Activated CD8-positive, alpha-beta T cell treated with anti-CD3 and anti-CD28 coated beads, Interleukin-2, amount 10 ng/mL, durations not matched to agents 7 days and 5 days (primary cell): ENCODE measurements at regions of chr1 and their contacts with region 1.

Region 1: DNA sequence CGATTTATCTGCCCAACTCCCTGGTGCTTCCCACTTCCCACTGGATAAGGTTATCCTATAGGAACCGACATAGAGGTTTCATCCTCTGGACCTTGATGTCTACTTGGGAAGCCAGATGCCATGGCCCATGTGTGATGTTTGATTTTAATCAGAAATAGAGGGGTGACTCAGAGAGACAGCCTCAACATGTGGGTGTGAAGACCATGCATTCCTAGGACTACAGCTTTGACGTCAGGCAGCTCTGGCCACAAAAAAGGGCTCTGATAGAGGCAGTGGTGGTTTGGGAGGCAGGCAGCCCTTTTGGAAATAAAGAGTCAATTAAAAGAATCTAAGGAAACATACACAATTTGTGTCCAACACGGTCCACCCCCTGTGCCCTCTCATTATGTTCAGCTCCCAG is 5.2 kb upstream of the SH2D2A start:
- DNase-seq: no peak
- ATAC-seq: peak; percentile 12
- H3K4me3 Mint-ChIP-seq: no peak overlapping the region
- H3K27ac Mint-ChIP-seq: no peak overlapping the region
- H3K4me1 Mint-ChIP-seq: peaks cover 39% of the 10 kb centered on the region
- H3K27me3 Mint-ChIP-seq: peaks cover 2% of the 10 kb centered on the region

Region 2: GRCh38 chr1:156833603-156834002 is 11.8 kb after region 1 on chr1:
- CTCF ChIA-PET with region 1: interaction called, 98 read pairs
- POLR2A ChIA-PET with region 1: interaction called, 5 read pairs
- DNase-seq: peak; percentile 50
- ATAC-seq: peak; percentile 81
- H3K4me3 Mint-ChIP-seq: no peak overlapping the region
- H3K27ac Mint-ChIP-seq: no peak overlapping the region
- H3K4me1 Mint-ChIP-seq: peaks cover 46% of the 10 kb centered on the region
- H3K27me3 Mint-ChIP-seq: peaks cover 12% of the 10 kb centered on the region

Region 3: GRCh38 chr1:156931974-156932710 is 110.3 kb after region 1 on chr1:
- CTCF ChIA-PET with region 1: no interaction called
- POLR2A ChIA-PET with region 1: no interaction called
- DNase-seq: no peak
- ATAC-seq: no peak
- H3K4me3 Mint-ChIP-seq: no peak overlapping the region
- H3K27ac Mint-ChIP-seq: no peak overlapping the region
- H3K4me1 Mint-ChIP-seq: peaks cover 15% of the 10 kb centered on the region
- H3K27me3 Mint-ChIP-seq: peaks cover 41% of the 10 kb centered on the region